ENCODE measurements at regions of chr17 and their contacts with region 1.

Region 1: DNA sequence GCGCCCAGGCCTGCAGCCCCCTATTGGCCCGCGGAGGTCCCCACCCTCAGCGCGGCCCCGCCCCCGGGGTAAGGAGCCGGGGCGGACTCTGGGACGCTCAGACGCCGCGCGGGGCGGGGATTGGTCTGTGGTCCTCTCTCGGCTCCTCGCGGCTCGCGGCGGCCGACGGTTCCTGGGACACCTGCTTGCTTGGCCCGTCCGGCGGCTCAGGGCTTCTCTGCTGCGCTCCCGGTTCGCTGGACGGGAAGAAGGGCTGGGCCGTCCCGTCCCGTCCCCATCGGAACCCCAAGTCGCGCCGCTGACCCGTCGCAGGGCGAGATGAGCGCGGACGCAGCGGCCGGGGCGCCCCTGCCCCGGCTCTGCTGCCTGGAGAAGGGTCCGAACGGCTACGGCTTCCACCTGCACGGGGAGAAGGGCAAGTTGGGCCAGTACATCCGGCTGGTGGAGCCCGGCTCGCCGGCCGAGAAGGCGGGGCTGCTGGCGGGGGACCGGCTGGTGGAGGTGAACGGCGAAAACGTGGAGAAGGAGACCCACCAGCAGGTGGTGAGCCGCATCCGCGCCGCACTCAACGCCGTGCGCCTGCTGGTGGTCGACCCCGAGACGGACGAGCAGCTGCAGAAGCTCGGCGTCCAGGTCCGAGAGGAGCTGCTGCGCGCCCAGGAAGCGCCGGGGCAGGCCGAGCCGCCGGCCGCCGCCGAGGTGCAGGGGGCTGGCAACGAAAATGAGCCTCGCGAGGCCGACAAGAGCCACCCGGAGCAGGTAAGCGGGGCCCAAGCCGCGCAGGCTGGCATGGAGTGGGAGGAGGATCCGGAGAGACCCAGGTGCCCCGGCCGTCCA is at the start of gene NHERF1:
- DNase-seq: peak; percentile 95
- H3K4me3 Mint-ChIP-seq: peak within 1 kb of the TSS; percentile 95
- H3K27ac Mint-ChIP-seq: peak within 1 kb of the TSS; percentile 91
- H3K4me1 Mint-ChIP-seq: peaks cover 70% of the 10 kb centered on the region
- H3K27me3 Mint-ChIP-seq: no peaks in the 10 kb centered on the region
- total RNA-seq, gene NHERF1: 142 and 153 TPM in 2 replicates

Region 2: DNA sequence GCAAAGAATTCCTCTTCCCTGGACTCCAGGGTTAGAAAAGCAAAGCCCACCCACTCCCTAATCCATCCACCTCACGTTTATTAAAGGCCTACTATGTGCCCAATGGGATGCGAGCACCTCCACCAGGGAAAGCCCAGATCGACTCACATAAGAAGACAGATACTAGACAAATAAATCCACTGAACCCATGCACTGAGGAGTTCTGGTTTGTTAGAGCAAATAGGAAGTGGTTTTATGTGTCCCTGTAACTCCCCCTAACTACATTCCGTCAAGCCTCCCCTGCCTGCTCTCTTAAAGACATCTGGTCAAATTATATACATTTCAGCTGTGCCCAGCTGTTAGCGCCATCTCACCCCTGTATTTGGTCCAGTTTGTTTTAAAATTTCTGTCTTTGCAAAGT is 763.8 kb before region 1 on chr17:
- intact Hi-C with region 1: no loop called
- DNase-seq: no peak
- H3K4me3 Mint-ChIP-seq: no peak overlapping the region
- H3K27ac Mint-ChIP-seq: no peak overlapping the region
- H3K4me1 Mint-ChIP-seq: no peaks in the 10 kb centered on the region
- H3K27me3 Mint-ChIP-seq: peaks cover 2% of the 10 kb centered on the region

Region 3: DNA sequence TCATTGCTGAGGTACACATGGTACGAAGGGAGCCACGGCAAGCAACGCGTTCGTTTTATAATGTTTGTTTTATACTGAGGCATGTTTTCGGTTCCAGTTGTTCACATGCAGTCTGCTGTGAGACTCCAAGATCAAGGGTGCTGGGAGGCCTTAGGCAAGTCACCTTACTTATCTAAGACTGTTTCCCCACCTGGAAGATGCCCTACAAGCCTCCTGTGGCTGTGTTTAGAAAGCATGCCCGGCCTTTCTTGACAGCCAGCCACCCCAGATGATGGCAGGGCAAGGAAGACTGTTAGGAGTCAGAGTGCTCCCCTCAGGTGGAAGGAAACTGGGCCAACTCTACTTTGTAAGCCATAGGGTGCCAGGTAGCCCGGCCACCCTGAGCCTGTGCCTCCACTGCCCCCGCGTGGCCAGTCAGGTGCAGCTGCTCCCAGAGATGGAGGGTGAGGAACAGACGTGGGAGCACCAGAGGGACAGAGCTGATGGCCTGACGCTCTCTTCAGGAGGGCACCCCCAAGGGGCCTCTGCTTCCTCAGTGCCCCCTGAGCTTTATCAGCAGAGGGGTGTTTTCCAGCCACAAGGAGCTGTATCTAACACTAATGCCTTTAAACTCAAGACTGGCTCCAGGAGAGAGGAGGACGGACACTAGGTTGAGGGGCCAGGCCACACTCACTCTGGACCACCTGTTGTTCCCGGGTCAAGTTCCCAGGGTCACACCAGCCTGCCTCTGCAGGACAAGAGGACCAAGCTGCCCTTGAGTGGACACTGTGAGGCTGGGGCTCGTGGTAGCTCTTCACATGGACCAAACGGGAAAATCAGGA is 22.0 kb after region 1 on chr17:
- intact Hi-C with region 1: loop called (anchors 1 kb)
- DNase-seq: peak; percentile 54
- H3K4me3 Mint-ChIP-seq: no peak overlapping the region
- H3K27ac Mint-ChIP-seq: peak overlapping the region; percentile 48
- H3K4me1 Mint-ChIP-seq: peaks cover 31% of the 10 kb centered on the region
- H3K27me3 Mint-ChIP-seq: no peaks in the 10 kb centered on the region

Region 4: DNA sequence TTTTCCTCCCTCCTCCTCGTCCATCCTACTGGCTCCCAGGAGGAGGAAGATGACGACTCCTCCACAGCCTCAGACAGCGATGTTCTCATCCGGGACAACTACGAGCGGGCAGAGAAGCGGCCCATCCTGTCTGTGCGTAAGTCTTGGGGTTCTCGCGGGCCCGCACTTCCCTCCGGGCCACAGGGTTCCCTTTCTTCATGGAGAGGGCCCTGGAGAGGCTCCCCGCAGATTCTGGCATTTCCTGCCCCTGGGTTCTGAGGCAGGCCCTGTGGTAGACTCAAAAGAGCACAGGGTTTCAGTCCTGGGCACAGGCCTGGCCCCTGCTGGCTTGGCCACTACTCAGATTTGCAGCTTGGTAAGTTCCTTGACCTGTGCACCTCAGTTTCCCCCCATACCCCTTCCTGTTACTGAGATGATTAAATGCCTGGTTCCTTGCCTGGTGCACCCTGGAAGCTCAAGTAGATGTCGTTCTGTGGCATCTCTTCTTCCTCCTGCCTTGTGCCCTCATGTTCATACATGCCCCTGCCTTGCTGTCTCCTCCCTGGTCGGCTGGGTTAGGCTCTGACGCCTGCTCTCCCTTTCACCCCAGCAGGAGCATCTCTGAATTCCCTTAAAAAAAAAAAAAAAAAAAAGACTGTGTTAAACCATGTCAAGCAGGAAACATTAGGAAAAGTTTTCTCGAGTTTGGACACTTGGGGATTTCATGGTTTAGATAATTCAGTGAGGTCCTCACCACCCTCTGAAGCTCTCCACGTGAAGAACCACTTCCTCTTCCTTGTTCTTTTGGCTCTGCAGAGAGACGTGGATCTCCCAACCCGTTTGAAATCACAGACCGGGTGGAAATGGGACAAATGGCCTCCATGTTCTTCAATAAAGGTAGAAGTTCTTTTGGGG is 41.7 kb after region 1 on chr17:
- intact Hi-C with region 1: loop called (anchors 1 kb)
- DNase-seq: no peak
- H3K4me3 Mint-ChIP-seq: no peak overlapping the region
- H3K27ac Mint-ChIP-seq: peak overlapping the region; percentile 47
- H3K4me1 Mint-ChIP-seq: peaks cover 39% of the 10 kb centered on the region
- H3K27me3 Mint-ChIP-seq: no peaks in the 10 kb centered on the region

Region 5: DNA sequence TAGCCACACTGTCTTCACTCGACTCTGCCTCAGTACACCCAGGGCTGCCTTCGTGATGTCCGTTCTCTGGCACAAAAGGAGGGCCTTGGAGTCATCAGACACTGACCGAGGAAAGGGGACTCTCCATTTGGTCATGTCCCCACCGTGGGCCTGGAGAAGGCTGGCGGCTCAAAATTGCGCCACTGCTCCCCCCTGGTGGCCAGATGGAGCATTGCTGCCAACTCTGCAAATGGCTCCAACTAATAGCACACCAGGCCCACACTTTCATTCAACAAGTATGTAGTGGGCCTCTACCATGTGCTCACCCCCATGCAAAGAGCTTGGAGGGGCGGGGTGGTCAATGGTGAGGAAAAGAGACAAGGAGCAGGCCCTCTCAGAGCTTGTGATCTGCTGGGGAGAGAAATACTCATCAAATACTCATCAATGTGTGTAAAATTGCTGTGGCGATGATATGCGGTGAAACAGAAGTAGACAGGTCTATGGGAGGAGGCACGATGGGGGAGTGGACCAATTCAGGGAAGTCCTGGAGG is 116.2 kb after region 1 on chr17:
- intact Hi-C with region 1: loop called (anchors 1 kb)
- DNase-seq: peak; percentile 54
- H3K4me3 Mint-ChIP-seq: no peak overlapping the region
- H3K27ac Mint-ChIP-seq: no peak overlapping the region
- H3K4me1 Mint-ChIP-seq: peaks cover 8% of the 10 kb centered on the region
- H3K27me3 Mint-ChIP-seq: peaks cover 15% of the 10 kb centered on the region

Region 6: GRCh38 chr17:74961657-74962490 is 213.1 kb after region 1 on chr17:
- intact Hi-C with region 1: loop called (anchors 2 kb)
- DNase-seq: peak; percentile 70
- H3K4me3 Mint-ChIP-seq: no peak overlapping the region
- H3K27ac Mint-ChIP-seq: no peak overlapping the region
- H3K4me1 Mint-ChIP-seq: no peaks in the 10 kb centered on the region
- H3K27me3 Mint-ChIP-seq: peaks cover 6% of the 10 kb centered on the region

Measured in activated T-helper 1 cell treated with anti-CD3 and anti-CD28 coated beads, Interleukin-12 subunit alpha, Interleukin-12 subunit beta, Interleukin-2, Interleukin-4 antibody, amounts not matched to agents 30 ng/mL and 10 ng/mL and 1 ng/mL, durations not matched to agents 14 hours and 24 hours and 36 hours (primary cell).